ENCODE measurements at regions of chr6 and their contacts with region 1.

Region 1: GRCh38 chr6:2841264-2842138 is at the start of gene SERPINB1:
- DNase-seq: no peak
- H3K4me3 ChIP-seq: peak within 1 kb of the TSS; percentile 36
- CTCF ChIP-seq: no peak

Region 2: GRCh38 chr6:2791124-2791974 is 50.2 kb before region 1 on chr6:
- in situ Hi-C with region 1: loop called (anchors 10 kb)
- DNase-seq: peak; percentile 49
- H3K4me3 ChIP-seq: no peak overlapping the region
- CTCF ChIP-seq: peak; percentile 81

Region 3: DNA sequence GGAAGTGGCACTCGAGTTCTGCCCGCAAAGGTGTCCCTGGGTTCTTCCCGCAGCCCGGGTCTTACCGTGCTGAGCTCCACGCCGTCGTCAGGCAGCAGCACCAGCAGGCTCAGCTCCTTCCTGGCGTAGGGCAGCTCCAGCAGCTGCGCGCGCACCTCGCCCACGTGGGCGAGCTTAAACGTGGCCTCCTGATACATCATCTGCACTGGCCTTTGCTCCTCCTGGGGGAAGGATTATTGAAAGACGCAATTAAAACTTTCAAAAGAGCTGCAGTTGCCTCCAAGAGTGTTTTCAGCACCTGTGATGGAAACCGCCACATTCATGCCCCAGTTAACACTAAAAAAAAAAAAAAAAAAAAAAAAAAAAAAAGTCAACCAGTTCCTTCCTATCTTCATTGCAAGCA is 50.3 kb after region 1 on chr6:
- in situ Hi-C with region 1: no loop called
- DNase-seq: no peak
- H3K4me3 ChIP-seq: no peak overlapping the region
- CTCF ChIP-seq: no peak

Region 4: GRCh38 chr6:2931970-2932748 is 90.7 kb after region 1 on chr6:
- in situ Hi-C with region 1: loop called (anchors 5 kb)
- DNase-seq: peak; percentile 39
- H3K4me3 ChIP-seq: no peak overlapping the region
- CTCF ChIP-seq: peak; percentile 99